CD4-positive, alpha-beta memory T cell (primary cell): ENCODE measurements at regions of chr5 and their contacts with region 1.

Region 1: GRCh38 chr5:133968049-133968980 is at the start of gene C5orf15:
- DNase-seq: peak; percentile 88 to 97 (median 88)
- H3K4me3 ChIP-seq: peak within 1 kb of the TSS; percentile 55 to 84
- H3K4me3 Mint-ChIP-seq: peak within 1 kb of the TSS; percentile 89 to 99 (median 97)
- H3K27ac ChIP-seq: peak within 1 kb of the TSS; percentile 95
- H3K27ac Mint-ChIP-seq: peak within 1 kb of the TSS; percentile 94 to 99 (median 98)
- H3K4me1 ChIP-seq: peaks cover 34% of the 10 kb centered on the region
- H3K4me1 Mint-ChIP-seq: peaks cover 33 to 52% (median 41%) of the 10 kb centered on the region in 4 donors
- H3K27me3 ChIP-seq: no peaks in the 10 kb centered on the region
- H3K27me3 Mint-ChIP-seq: no peaks in the 10 kb centered on the region
- total RNA-seq, gene C5orf15: 13.3 to 16.0 TPM

Region 2: DNA sequence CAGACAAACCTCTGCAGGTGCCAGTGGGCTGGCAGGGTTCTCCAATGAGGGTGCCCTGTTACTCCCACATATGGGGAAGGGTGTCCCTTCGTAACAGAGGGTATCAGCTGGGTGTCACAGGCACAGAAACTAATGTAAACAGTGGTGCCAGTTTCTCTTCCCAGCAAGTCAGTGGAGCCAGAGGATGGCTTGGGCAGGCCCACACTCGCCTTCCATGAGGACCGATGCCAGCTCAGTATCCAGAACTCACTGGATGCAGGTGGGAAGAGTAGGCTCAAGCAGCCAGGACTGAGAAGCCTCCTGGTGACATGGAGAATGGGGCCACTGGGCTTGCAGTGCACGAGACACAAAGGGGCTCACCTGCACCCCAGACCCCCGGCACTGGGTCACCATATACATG is 386.4 kb before region 1 on chr5:
- CTCF ChIA-PET with region 1: no interaction called
- POLR2A ChIA-PET with region 1: no interaction called
- intact Hi-C with region 1: no loop called
- DNase-seq: no peak
- H3K4me3 ChIP-seq: no peak overlapping the region
- H3K4me3 Mint-ChIP-seq: no peak overlapping the region
- H3K27ac ChIP-seq: no peak overlapping the region
- H3K27ac Mint-ChIP-seq: no peak overlapping the region
- H3K4me1 ChIP-seq: no peaks in the 10 kb centered on the region
- H3K4me1 Mint-ChIP-seq: no peaks in the 10 kb centered on the region
- H3K27me3 ChIP-seq: no peaks in the 10 kb centered on the region
- H3K27me3 Mint-ChIP-seq: peaks cover 23 to 27% of the 10 kb centered on the region in 2 donors

Region 3: GRCh38 chr5:134004592-134005375 is 36.5 kb after region 1 on chr5 and contains the start of gene VDAC1:
- CTCF ChIA-PET with region 1: no interaction called
- POLR2A ChIA-PET with region 1: interaction called, 14 read pairs
- intact Hi-C with region 1: loop called (anchors 1 kb)
- DNase-seq: peak; percentile 89 to 95 (median 92)
- H3K4me3 ChIP-seq: peak within 1 kb of the TSS; percentile 61 to 81
- H3K4me3 Mint-ChIP-seq: peak within 1 kb of the TSS; percentile 89 to 99 (median 93)
- H3K27ac ChIP-seq: peak within 1 kb of the TSS; percentile 96
- H3K27ac Mint-ChIP-seq: peak within 1 kb of the TSS; percentile 96 to 99 (median 98)
- H3K4me1 ChIP-seq: peaks cover 49% of the 10 kb centered on the region
- H3K4me1 Mint-ChIP-seq: peaks cover 26 to 50% (median 38%) of the 10 kb centered on the region in 4 donors
- H3K27me3 ChIP-seq: no peaks in the 10 kb centered on the region
- H3K27me3 Mint-ChIP-seq: no peaks in the 10 kb centered on the region
- total RNA-seq, gene VDAC1: 45.1 to 46.4 TPM